ENCODE measurements at regions of chr1 and their contacts with region 1.

Region 1: DNA sequence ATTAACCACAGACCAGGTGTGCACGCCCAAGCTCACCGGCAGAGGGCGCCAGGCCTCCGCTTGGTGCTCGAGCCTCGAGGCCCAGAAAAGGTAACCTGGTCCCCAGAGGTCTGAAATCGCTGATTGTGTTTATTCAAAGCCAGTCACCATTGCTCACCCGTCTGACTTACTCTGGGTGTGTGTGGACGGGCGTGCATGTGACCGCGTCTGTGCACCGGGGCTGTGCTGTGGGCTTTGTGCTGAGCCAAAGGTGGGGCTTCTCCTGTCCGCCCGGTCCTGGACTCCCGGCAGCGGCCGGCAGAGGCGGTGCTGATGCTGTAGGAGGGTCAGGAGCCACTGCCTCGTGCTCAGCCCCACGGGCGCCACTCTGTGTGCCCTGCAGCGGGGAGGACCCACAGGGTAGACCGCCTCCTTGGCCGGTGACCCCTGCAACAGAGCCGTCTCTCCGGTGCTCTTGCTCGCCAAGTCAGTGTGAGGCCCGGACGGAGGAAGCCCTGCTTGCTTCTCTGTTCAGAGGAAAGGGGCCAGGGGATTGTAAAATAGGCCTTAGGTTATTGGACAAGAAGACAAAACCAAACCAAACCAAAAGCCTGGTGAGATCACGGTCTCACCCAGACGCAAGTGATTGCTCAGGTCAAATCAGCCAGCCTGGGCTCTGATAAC is 32.0 kb upstream of the BTG2 start:
- DNase-seq: peak; percentile 72
- ATAC-seq: peak; percentile 85
- H3K4me3 ChIP-seq: peak overlapping the region; percentile 63
- H3K27ac ChIP-seq: peak overlapping the region; percentile 89
- H3K4me1 ChIP-seq: peaks cover 41% of the 10 kb centered on the region
- H3K27me3 ChIP-seq: no peaks in the 10 kb centered on the region
- CTCF ChIP-seq: peak; percentile 90 to 95 (median 90)
- EP300 ChIP-seq: no peak
- POLR2A ChIP-seq: peak; percentile 70
- RAD21 ChIP-seq: peak; percentile 97

Region 2: DNA sequence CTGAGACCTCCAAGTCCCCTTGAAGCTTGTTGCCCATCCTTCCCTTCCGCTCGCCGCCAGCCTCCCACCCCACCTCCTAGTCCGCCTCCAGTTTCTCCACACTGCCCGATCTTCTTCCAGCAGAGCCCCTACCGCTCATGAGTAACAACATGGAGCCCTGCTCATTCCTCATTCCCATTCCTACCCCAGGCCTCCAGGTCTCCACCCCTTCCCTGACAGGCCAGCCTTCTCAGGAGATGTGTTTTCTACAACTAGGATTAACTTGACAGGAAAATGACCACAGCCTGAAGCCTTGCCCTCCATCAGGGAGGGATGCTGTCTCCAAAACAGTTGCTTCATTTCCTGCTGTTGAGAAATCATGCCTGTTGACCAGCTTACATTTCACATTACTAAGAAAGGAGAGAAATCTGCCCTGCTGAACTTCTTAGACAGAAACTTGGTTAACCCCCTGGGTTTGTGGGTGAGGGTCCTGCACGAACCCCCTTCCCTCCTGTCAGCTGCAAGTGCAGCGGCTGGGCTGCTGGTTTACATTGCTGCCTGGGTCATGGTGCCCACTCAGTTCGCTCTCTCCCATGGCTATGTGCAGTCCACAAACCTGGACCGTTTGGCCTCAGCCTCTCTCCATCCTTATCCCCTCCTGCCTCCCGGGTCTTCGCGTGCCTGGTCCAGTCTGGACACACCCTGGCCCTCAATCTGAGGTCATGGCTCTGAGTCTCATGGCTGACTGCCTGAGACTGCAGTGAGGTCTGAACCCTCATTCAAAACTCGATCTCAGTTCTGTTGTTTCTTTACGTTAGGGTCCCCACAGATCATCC is 70.7 kb before region 1 on chr1:
- CTCF ChIA-PET with region 1: no interaction called
- POLR2A ChIA-PET with region 1: no interaction called
- RAD21 ChIA-PET with region 1: no interaction called
- SMC1A ChIA-PET with region 1: no interaction called
- in situ Hi-C with region 1: no loop called
- intact Hi-C with region 1: no loop called
- DNase-seq: no peak
- ATAC-seq: no peak
- H3K4me3 ChIP-seq: no peak overlapping the region
- H3K27ac ChIP-seq: no peak overlapping the region
- H3K4me1 ChIP-seq: no peaks in the 10 kb centered on the region
- H3K27me3 ChIP-seq: peaks cover 0 to 5% of the 10 kb centered on the region in 2 experiments; a peak in 3 of 4 replicates
- CTCF ChIP-seq: no peak
- EP300 ChIP-seq: no peak
- POLR2A ChIP-seq: no peak
- RAD21 ChIP-seq: no peak

Region 3: DNA sequence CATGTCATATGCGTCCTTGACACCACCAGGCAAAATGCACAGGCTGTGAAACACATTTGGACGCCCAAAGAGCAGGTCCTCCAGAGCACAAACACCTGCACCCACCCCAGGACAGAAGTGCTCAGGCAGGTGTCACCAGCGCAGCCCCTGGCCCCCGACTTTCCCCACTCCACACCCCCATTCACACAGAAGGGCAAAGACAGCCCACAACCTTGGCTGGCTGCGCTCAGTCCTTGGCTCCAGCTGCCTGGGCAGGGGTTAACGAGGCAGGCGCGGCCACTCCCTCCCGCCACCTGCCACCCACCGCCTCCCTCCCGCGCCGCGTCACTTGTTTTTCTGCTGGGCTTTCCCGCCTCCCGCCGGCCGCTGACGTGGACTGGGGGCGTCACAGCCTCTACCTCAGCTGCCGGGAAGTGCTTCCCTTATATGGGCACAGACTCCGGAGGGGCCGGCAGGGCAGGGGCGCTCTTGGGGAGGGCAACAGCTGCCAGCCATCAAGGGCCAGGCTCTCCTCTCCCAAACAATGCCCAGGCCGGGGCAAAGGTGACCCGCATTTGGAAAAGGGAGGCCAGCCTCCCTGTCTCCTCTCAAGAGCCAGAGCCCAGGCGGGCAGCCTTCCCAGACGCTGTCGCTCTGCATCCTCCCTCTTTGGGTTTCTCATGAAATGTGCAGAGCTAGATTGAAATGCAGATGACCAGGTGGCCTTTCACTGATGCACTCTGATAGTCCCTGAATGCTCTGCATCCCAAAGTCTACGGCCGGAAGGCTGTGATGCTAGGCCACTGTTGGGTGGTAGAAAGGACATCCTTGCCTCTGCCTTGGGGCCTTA is 17.1 kb after region 1 on chr1:
- CTCF ChIA-PET with region 1: interaction called, 186 read pairs
- POLR2A ChIA-PET with region 1: interaction called, 168 read pairs
- RAD21 ChIA-PET with region 1: interaction called, 251 read pairs
- SMC1A ChIA-PET with region 1: no interaction called
- in situ Hi-C with region 1: no loop called
- intact Hi-C with region 1: loop called (anchors 1 kb)
- DNase-seq: no peak
- ATAC-seq: peak; percentile 72
- H3K4me3 ChIP-seq: peak overlapping the region; percentile 65
- H3K27ac ChIP-seq: peak overlapping the region; percentile 100
- H3K4me1 ChIP-seq: peaks cover 58% of the 10 kb centered on the region
- H3K27me3 ChIP-seq: no peaks in the 10 kb centered on the region
- CTCF ChIP-seq: no peak
- EP300 ChIP-seq: peak; percentile 42 to 60; a peak in 3 of 4 replicates
- POLR2A ChIP-seq: peak; percentile 86
- RAD21 ChIP-seq: no peak

Region 4: GRCh38 chr1:203304919-203305808 is 31.8 kb after region 1 on chr1 and contains the start of gene BTG2:
- CTCF ChIA-PET with region 1: interaction called, 70 read pairs
- POLR2A ChIA-PET with region 1: interaction called, 370 read pairs
- RAD21 ChIA-PET with region 1: interaction called, 470 read pairs
- SMC1A ChIA-PET with region 1: interaction called, 183 read pairs
- in situ Hi-C with region 1: no loop called
- intact Hi-C with region 1: loop called (anchors 1 kb)
- DNase-seq: no peak
- ATAC-seq: peak; percentile 82
- H3K4me3 ChIP-seq: peak within 1 kb of the TSS; percentile 97
- H3K27ac ChIP-seq: peak within 1 kb of the TSS; percentile 91
- H3K4me1 ChIP-seq: peaks cover 38% of the 10 kb centered on the region
- H3K27me3 ChIP-seq: no peaks in the 10 kb centered on the region
- CTCF ChIP-seq: no peak
- EP300 ChIP-seq: no peak
- POLR2A ChIP-seq: peak; percentile 98
- RAD21 ChIP-seq: 0 out of 2 replicates have a peak, but pooled peaks have one; percentile 8
- polyA plus RNA-seq, gene BTG2: 23.3 to 37.2 TPM

Region 5: GRCh38 chr1:203326830-203327683 is 53.7 kb after region 1 on chr1:
- CTCF ChIA-PET with region 1: interaction called, 854 read pairs
- POLR2A ChIA-PET with region 1: interaction called, 395 read pairs
- RAD21 ChIA-PET with region 1: interaction called, 541 read pairs
- SMC1A ChIA-PET with region 1: interaction called, 590 read pairs
- in situ Hi-C with region 1: no loop called
- intact Hi-C with region 1: loop called (anchors 1 kb)
- DNase-seq: peak; percentile 88
- ATAC-seq: peak; percentile 81
- H3K4me3 ChIP-seq: peak overlapping the region; percentile 60
- H3K27ac ChIP-seq: peak overlapping the region; percentile 98
- H3K4me1 ChIP-seq: peaks cover 62% of the 10 kb centered on the region
- H3K27me3 ChIP-seq: no peaks in the 10 kb centered on the region
- CTCF ChIP-seq: peak in 2 of 3 experiments; percentile 12 to 22; a peak in 1 of 6 replicates
- EP300 ChIP-seq: peak; percentile 62 to 85; a peak in 3 of 4 replicates
- POLR2A ChIP-seq: peak; percentile 78
- RAD21 ChIP-seq: no peak

Region 6: GRCh38 chr1:203486618-203487370 is 213.5 kb after region 1 on chr1:
- CTCF ChIA-PET with region 1: interaction called, 81 read pairs
- POLR2A ChIA-PET with region 1: no interaction called
- RAD21 ChIA-PET with region 1: interaction called, 10 read pairs
- SMC1A ChIA-PET with region 1: interaction called, 20 read pairs
- in situ Hi-C with region 1: loop called (anchors 5 kb)
- intact Hi-C with region 1: no loop called
- DNase-seq: no peak
- ATAC-seq: peak; percentile 7; the same call in 2 of the 3 replicates
- H3K4me3 ChIP-seq: no peak overlapping the region
- H3K27ac ChIP-seq: no peak overlapping the region
- H3K4me1 ChIP-seq: 0 out of 2 replicates have a peak, but pooled peaks cover 3% of the 10 kb centered on the region
- H3K27me3 ChIP-seq: peaks cover 0 to 10% of the 10 kb centered on the region in 2 experiments; a peak in 2 of 4 replicates
- CTCF ChIP-seq: no peak
- EP300 ChIP-seq: no peak
- POLR2A ChIP-seq: no peak
- RAD21 ChIP-seq: no peak